ENCODE measurements at regions of chrX and their contacts with region 1.

Region 1: DNA sequence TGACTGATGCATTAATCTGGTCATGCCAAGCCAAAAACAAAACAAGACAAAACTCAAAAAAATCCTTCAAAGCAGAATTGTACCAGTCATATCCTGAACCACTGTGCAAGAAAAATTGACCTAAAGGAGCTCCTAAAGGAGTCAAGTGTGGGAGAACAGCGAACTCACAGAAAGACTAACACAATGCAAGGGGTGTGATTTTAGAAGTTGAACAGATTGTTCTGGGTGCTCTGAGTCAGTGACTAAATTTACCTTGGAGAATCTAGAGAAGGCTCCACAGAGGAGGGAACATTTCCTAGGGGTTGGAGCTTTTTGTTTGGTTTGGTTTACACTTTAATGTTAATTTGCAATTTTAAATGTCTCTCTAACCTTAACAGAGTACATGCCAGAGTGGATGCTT is 48.9 kb upstream of the PHF8 start:
- DNase-seq: no peak
- H3K4me3 ChIP-seq: no peak overlapping the region
- H3K27ac ChIP-seq: no peak overlapping the region
- H3K27me3 ChIP-seq: no peaks in the 10 kb centered on the region
- CTCF ChIP-seq: no peak

Region 2: GRCh38 chrX:53930515-53931380 is 162.4 kb before region 1 on chrX:
- CTCF ChIA-PET with region 1: no interaction called
- POLR2A ChIA-PET with region 1: no interaction called
- DNase-seq: peak; percentile 1
- H3K4me3 ChIP-seq: no peak overlapping the region
- H3K27ac ChIP-seq: no peak overlapping the region
- H3K27me3 ChIP-seq: no peaks in the 10 kb centered on the region
- CTCF ChIP-seq: no peak

Region 3: GRCh38 chrX:54066841-54067240 is 26.3 kb before region 1 on chrX:
- CTCF ChIA-PET with region 1: no interaction called
- POLR2A ChIA-PET with region 1: interaction called, 13 read pairs
- DNase-seq: no peak
- H3K4me3 ChIP-seq: no peak overlapping the region
- H3K27ac ChIP-seq: no peak overlapping the region
- H3K27me3 ChIP-seq: no peaks in the 10 kb centered on the region
- CTCF ChIP-seq: no peak

Region 4: DNA sequence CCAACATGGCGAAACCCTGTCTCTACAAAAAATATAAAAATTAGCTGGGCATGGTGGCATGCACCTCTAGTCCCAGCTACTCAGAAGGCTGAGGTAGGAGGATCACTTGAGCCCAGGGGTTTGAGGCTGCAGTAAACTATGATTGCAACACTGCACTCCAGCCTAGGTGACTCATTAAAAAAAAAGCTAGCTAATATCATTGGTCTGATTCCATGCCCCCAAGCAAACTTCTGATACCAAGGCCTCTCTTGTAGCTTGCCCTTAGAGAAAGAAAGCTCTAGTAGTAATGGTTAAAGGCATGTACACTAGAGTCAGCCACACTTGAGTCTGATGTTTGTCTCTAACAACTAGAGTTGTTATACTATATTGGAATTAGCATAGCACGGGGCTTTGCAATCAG is 16.3 kb before region 1 on chrX:
- CTCF ChIA-PET with region 1: no interaction called
- POLR2A ChIA-PET with region 1: no interaction called
- DNase-seq: peak; percentile 15
- H3K4me3 ChIP-seq: no peak overlapping the region
- H3K27ac ChIP-seq: no peak overlapping the region
- H3K27me3 ChIP-seq: no peaks in the 10 kb centered on the region
- CTCF ChIP-seq: no peak

Measured in AG04450 (cell line).